ENCODE measurements at regions of chr13 and their contacts with region 1.

Region 1: DNA sequence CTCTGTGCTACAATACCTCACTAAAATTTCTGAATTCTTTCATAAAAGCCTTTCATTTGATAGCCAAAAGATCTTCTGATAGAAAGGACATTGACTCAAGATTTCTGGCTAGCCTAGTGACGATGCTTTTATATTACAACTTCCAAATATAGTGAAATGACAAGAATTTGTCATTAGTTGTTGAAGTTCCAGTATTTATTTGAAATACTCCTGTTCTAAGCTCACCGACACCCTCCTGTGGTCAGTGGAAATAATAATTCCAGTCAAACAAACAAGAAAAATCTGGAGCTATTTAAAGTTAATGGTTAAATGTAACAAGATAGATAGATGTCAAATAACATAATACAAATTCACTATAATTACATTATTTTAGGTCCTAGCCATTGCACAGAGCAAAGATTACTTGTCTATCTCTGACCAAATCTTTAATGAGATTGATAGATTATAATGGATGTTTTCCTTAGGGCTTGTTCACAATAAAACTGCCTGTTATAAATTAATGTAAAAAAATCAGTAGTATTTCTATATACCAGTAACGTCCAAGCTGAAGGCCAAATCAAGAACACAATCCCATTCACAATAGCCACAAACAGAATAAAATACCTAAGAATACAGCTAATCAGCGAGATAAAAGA is 195.5 kb downstream of the RGCC start:
- DNase-seq: no peak
- ATAC-seq: no peak
- H3K4me3 Mint-ChIP-seq: no peak overlapping the region
- H3K27ac Mint-ChIP-seq: no peak overlapping the region
- H3K4me1 Mint-ChIP-seq: peaks cover 9% of the 10 kb centered on the region
- H3K27me3 Mint-ChIP-seq: peaks cover 41% of the 10 kb centered on the region
- CTCF ChIP-seq: no peak

Region 2: GRCh38 chr13:41428155-41428554 is 224.7 kb before region 1 on chr13:
- CTCF ChIA-PET with region 1: no interaction called
- POLR2A ChIA-PET with region 1: no interaction called
- intact Hi-C with region 1: loop called (anchors 5 kb)
- DNase-seq: no peak
- ATAC-seq: peak; percentile 37
- H3K4me3 Mint-ChIP-seq: peak overlapping the region; percentile 11
- H3K27ac Mint-ChIP-seq: no peak overlapping the region
- H3K4me1 Mint-ChIP-seq: peaks cover 6% of the 10 kb centered on the region
- H3K27me3 Mint-ChIP-seq: peaks cover 17% of the 10 kb centered on the region
- CTCF ChIP-seq: no peak